ENCODE measurements at regions of chr6 and their contacts with region 1.

Region 1: DNA sequence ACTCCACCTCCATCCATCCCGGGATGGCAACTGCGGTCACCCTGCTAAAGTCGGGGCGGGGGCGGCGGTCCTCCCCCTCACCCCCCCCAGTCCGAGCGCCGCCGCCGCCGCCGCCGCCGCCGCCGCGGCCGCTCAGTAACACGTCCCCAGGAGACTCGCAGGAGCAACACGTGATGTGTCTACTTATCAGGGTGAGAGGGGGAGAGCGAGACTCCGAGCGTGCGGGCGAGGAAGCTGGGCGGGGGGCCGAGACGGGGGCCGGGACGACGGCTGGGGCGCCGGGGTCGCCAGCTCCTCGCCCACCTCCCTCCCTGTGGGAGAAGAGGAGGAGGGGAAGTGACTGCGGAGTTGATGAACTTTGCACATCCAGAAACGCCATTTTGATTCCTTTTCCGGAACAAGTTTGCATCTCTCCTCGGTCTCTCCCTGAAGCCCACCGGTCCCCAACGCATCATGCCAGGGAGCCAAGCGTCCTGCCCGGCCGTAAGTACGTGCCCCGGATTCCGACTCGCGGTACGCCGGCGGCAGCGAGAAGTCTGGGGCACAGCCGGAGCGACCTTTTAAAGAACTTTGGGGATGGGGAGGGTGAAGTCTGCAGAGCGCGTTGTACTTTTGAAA is at the start of gene RREB1:
- DNase-seq: peak; percentile 69 to 79 (median 77)
- ATAC-seq: peak in 3 of 4 donors; percentile 69 to 77 (median 77)
- H3K4me3 ChIP-seq: peak within 1 kb of the TSS; percentile 71 to 99 (median 96)
- H3K27ac ChIP-seq: peak within 1 kb of the TSS; percentile 88 to 99 (median 96)
- H3K4me1 ChIP-seq: peaks cover 0 to 44% (median 29%) of the 10 kb centered on the region in 12 donors
- H3K27me3 ChIP-seq: no peaks in the 10 kb centered on the region
- CTCF ChIP-seq: no peak
- POLR2A ChIP-seq: peak in 1 of 2 donors; percentile 29
- total RNA-seq, gene RREB1: 28.6 to 49.4 (median 40.1) TPM

Region 2: GRCh38 chr6:6676910-6677441 is 430.7 kb before region 1 on chr6:
- intact Hi-C with region 1: loop called in 1 of 10 experiments (anchors 10 kb)
- DNase-seq: peak in 4 of 5 donors; percentile 63 to 75 (median 72)
- ATAC-seq: peak; percentile 73 to 87 (median 86)
- H3K4me3 ChIP-seq: no peak overlapping the region
- H3K27ac ChIP-seq: peak overlapping the region in 11 of 12 donors; percentile 15 to 77 (median 58)
- H3K4me1 ChIP-seq: peaks cover 0 to 45% (median 11%) of the 10 kb centered on the region in 12 donors
- H3K27me3 ChIP-seq: no peaks in the 10 kb centered on the region
- CTCF ChIP-seq: peak; percentile 95 to 99 (median 98)
- POLR2A ChIP-seq: no peak

Region 3: DNA sequence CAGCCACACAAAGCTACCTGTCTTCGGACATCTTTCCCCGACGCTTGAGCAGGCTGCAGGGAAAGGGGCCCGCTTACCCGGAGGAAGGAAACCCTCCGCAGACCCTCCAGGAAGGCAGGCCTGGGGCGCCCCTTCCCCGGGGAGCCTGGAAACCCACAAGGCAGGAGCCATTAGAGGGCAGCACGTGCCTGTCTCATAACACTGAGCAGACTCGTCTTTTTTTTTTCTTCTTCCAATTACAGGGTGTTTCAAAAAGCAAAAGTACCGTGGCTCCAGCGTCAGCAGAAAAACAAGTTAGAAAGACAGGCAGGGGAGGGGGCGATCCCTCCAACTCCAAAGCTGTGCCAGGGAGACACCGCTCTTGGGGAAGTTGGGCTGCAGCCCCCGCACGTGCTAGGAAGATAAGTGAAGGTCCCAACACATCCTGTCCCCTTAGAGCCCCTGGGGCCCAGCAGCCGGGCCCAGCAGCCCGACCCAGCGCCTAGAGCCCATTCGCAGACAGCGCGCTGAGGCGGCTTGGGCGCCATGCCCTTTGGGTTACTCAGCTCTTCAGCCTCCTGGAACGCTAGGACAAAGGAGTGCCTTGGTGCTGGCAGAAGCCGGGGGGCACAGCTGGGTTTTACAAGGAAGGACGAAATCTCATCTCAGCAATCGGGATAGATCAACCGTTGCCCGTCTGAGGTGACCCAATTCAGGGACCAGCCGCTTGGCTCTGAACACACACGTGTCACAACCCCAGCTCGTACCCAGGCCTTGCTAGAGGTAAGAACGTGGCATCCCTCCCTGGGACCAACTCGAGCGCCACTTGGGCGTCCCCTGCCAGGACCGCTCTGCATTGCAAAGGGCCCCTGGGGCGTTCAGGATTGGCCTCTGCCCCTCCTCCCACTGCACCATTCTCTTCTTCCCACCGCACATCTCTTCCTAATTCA is 382.9 kb before region 1 on chr6:
- intact Hi-C with region 1: loop called in 3 of 10 experiments (anchors 5 to 10 kb)
- DNase-seq: peak; percentile 69 to 83 (median 72)
- ATAC-seq: peak; percentile 77 to 91 (median 86)
- H3K4me3 ChIP-seq: peak overlapping the region in 11 of 12 donors; percentile 22 to 51 (median 46)
- H3K27ac ChIP-seq: peak overlapping the region; percentile 62 to 96 (median 88)
- H3K4me1 ChIP-seq: peaks cover 2 to 55% (median 26%) of the 10 kb centered on the region in 12 donors
- H3K27me3 ChIP-seq: no peaks in the 10 kb centered on the region
- CTCF ChIP-seq: peak; percentile 43 to 85 (median 71)
- POLR2A ChIP-seq: no peak

Region 4: GRCh38 chr6:6927521-6928371 is 179.9 kb before region 1 on chr6:
- intact Hi-C with region 1: loop called in 2 of 10 experiments (anchors 10 kb)
- DNase-seq: peak; percentile 45 to 74 (median 48)
- ATAC-seq: peak; percentile 88 to 92 (median 90)
- H3K4me3 ChIP-seq: peak overlapping the region in 10 of 12 donors; percentile 18 to 53 (median 44)
- H3K27ac ChIP-seq: peak overlapping the region in 11 of 12 donors; percentile 61 to 86 (median 75)
- H3K4me1 ChIP-seq: peaks cover 0 to 28% (median 4%) of the 10 kb centered on the region in 12 donors
- H3K27me3 ChIP-seq: no peaks in the 10 kb centered on the region
- CTCF ChIP-seq: peak in 10 of 12 donors; percentile 6 to 43 (median 23)
- POLR2A ChIP-seq: no peak

Region 5: DNA sequence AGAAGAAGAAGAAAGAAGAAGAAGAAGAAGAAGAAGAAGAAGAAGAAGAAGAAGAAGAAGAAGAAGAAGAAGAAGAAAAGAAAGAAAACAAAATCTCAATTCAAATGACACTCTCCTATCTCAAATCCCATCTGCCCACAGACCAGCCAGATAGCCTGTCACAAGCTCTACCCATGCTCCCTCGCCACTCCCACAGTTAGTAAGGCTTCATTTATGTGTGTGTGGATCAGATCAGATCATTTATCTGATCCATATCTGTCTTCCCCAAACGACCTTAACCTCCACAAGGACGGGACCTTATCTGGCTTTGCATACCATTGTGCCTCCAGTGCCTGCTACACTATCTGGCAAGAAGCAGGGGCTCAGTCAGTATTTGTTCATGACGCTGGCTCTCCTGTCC is 81.8 kb before region 1 on chr6:
- intact Hi-C with region 1: no loop called
- DNase-seq: no peak
- ATAC-seq: no peak
- H3K4me3 ChIP-seq: no peak overlapping the region
- H3K27ac ChIP-seq: no peak overlapping the region
- H3K4me1 ChIP-seq: no peaks in the 10 kb centered on the region
- H3K27me3 ChIP-seq: no peaks in the 10 kb centered on the region
- CTCF ChIP-seq: no peak
- POLR2A ChIP-seq: no peak

Region 6: GRCh38 chr6:7051233-7052114 is 56.2 kb before region 1 on chr6:
- intact Hi-C with region 1: loop called in 6 of 10 experiments (anchors 1 to 10 kb)
- DNase-seq: peak; percentile 49 to 86 (median 65)
- ATAC-seq: peak; percentile 20 to 83 (median 75)
- H3K4me3 ChIP-seq: peak overlapping the region; percentile 47 to 75 (median 66)
- H3K27ac ChIP-seq: peak overlapping the region; percentile 33 to 92 (median 72)
- H3K4me1 ChIP-seq: peaks cover 0 to 52% (median 19%) of the 10 kb centered on the region in 12 donors
- H3K27me3 ChIP-seq: no peaks in the 10 kb centered on the region
- CTCF ChIP-seq: no peak
- POLR2A ChIP-seq: no peak

Region 7: DNA sequence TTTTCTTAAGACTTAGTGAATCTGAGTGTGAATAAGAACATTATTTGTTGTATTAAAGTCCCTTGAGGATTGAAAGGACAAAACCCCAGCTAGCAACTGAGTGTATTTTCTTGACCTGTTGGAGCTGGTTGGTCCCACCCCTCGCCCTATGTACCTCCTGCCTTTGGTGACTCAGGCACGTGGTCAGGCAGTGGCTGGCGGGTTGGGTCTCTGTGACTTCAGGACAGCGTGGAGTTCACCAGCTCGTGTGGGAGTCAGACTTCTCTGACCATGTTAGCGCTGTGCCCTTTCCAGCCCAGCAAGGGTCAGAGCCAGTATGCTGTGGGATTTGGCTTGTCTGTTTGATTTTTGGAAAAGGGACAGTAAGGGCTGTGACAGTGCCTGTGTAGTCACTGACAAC is 111.6 kb after region 1 on chr6:
- intact Hi-C with region 1: loop called in 6 of 10 experiments (anchors 5 to 10 kb)
- DNase-seq: peak in 1 of 5 donors; percentile 57
- ATAC-seq: peak in 3 of 4 donors; percentile 16 to 29 (median 28)
- H3K4me3 ChIP-seq: no peak overlapping the region
- H3K27ac ChIP-seq: peak overlapping the region in 11 of 12 donors; percentile 24 to 77 (median 64)
- H3K4me1 ChIP-seq: peaks cover 4 to 75% (median 59%) of the 10 kb centered on the region in 12 donors
- H3K27me3 ChIP-seq: no peaks in the 10 kb centered on the region
- CTCF ChIP-seq: no peak
- POLR2A ChIP-seq: no peak

Region 8: DNA sequence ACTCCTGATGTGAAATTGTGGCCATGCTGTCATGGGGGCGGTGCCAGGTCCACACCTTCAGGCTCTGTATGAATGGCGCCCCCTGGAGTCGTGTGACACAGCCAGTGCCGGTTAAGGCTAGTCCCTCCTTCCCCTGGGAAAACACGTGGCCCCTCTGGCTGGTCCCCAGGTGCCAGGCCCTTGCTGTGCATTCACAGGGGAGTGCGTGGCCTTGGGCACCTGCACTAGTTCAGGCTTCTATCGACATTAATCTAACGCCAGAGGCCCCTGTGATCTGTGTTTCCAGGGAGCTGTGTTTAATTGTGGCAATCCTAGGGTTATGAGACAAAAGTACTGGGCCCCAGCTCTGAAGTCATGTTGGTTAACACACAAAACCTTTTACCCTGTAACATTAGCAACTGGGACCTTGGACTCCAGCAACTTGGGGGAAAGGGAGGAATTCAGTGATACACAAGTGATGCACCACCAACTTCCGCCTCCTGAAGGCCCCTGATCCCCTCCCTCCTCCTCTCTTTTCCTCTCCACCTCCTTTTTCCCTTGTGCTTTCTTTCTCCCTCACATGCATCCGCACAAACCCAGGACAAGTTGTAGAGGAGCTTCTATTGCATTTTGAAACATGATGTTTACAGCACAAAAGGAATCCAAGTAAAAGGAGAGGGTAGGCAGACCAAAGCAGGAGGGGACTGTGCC is 131.4 kb after region 1 on chr6:
- intact Hi-C with region 1: loop called in 3 of 10 experiments (anchors 2 to 10 kb)
- DNase-seq: peak; percentile 83 to 94 (median 91)
- ATAC-seq: peak; percentile 79 to 89 (median 88)
- H3K4me3 ChIP-seq: no peak overlapping the region
- H3K27ac ChIP-seq: peak overlapping the region in 6 of 12 donors; percentile 10 to 59 (median 46)
- H3K4me1 ChIP-seq: peaks cover 0 to 53% (median 29%) of the 10 kb centered on the region in 12 donors
- H3K27me3 ChIP-seq: no peaks in the 10 kb centered on the region
- CTCF ChIP-seq: peak in 11 of 12 donors; percentile 50 to 77 (median 70)
- POLR2A ChIP-seq: no peak

Region 9: DNA sequence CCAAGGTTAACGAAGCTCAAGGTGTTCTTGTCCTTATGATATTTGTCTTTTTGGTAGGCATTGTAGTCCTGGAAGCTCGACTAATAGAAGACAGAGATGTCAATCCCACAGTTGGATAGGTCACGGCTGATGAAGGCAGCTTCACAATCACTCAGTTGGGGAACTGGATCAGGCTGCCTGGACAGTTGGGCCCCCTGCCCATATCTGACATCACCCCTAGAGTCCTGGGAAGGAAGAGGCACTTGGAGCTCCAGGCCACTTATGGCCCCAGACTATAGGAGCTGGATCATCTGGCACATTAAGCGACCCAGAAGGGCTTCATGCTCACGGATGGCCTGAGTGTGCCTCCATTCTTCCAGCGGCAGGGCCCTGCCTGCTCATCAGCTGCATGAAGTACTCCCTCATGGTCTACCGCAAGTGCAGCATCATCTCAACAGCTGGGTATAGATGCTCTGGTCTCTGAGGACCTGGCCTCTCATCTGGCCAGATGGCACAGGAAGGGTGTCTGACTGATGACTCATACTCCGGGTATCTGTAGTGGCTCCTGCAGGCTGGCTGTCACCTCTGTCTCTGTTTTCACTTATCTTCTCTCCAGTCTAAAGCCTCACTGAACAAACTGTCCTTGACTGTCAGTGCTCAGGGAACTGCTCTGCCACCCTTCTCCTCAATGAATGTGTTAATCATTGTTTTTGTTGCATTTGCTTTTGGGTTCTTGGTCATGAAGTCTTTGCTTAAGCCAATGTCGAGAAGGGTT is 234.5 kb after region 1 on chr6:
- intact Hi-C with region 1: no loop called
- DNase-seq: peak in 2 of 5 donors; percentile 40 to 43
- ATAC-seq: peak; percentile 83 to 90 (median 84)
- H3K4me3 ChIP-seq: no peak overlapping the region
- H3K27ac ChIP-seq: no peak overlapping the region
- H3K4me1 ChIP-seq: peaks cover 0 to 8% (median 0%) of the 10 kb centered on the region in 12 donors
- H3K27me3 ChIP-seq: peaks cover 0 to 7% (median 0%) of the 10 kb centered on the region in 9 donors
- CTCF ChIP-seq: no peak
- POLR2A ChIP-seq: no peak

Measured in heart left ventricle (tissue), 16 donors.